ENCODE measurements at regions of chr4 and their contacts with region 1.

Region 1: DNA sequence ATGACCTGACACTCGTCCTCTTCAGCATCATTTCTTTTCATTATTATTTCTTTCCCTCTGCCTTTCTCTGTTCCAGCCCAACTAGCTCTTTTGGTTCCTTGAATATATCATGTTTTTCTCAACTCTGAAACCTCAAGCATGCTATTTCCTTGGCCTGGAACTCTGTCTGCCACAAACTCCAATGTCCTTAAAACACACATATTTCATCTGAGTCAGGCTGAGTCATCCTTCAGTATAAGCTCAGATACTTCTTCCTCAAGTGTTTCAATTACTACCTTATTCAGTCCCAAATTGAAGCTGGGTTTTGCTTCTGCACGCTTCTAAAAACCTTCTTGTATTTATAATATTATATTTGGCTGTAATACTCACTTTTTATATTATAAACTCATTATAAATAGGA is 424.2 kb downstream of the PDGFC start:
- DNase-seq: peak; percentile 72
- ATAC-seq: peak; percentile 99
- H3K4me3 ChIP-seq: no peak overlapping the region
- H3K27ac ChIP-seq: peak overlapping the region; percentile 4; the same call in 1 of the 2 replicates
- H3K4me1 ChIP-seq: peaks cover 14% of the 10 kb centered on the region
- H3K27me3 ChIP-seq: no peaks in the 10 kb centered on the region
- CTCF ChIP-seq: no peak

Region 2: GRCh38 chr4:156594624-156595023 is 47.2 kb after region 1 on chr4:
- CTCF ChIA-PET with region 1: no interaction called
- POLR2A ChIA-PET with region 1: no interaction called
- intact Hi-C with region 1: loop called (anchors 1 kb)
- DNase-seq: peak; percentile 9
- ATAC-seq: peak; percentile 45; the same call in 1 of the 2 replicates
- H3K4me3 ChIP-seq: no peak overlapping the region
- H3K27ac ChIP-seq: peak overlapping the region; percentile 39
- H3K4me1 ChIP-seq: peaks cover 25% of the 10 kb centered on the region
- H3K27me3 ChIP-seq: no peaks in the 10 kb centered on the region
- CTCF ChIP-seq: no peak

Measured in PC-3 (cell line).